Activated T-helper 2 cell treated with anti-CD3 and anti-CD28 coated beads, Interferon-gamma antibody, Interleukin-2, Interleukin-4, amounts not matched to agents 10 μg/mL and 5 μg/mL and 100 μg/mL, durations not matched to agents 14 hours and 24 hours and 36 hours (primary cell): ENCODE measurements at regions of chr5 and their contacts with region 1.

Region 1: GRCh38 chr5:55763746-55764420 is 26.0 kb downstream of the DDX4 start:
- DNase-seq: no peak
- H3K4me3 Mint-ChIP-seq: peak overlapping the region; percentile 61
- H3K27ac Mint-ChIP-seq: peak overlapping the region; percentile 62
- H3K4me1 Mint-ChIP-seq: peaks cover 39% of the 10 kb centered on the region
- H3K27me3 Mint-ChIP-seq: no peaks in the 10 kb centered on the region

Region 2: GRCh38 chr5:55711968-55712859 is 51.7 kb before region 1 on chr5 and contains the start of gene SLC38A9:
- intact Hi-C with region 1: loop called (anchors 5 kb)
- DNase-seq: peak; percentile 88
- H3K4me3 Mint-ChIP-seq: peak within 1 kb of the TSS; percentile 98
- H3K27ac Mint-ChIP-seq: peak within 1 kb of the TSS; percentile 90
- H3K4me1 Mint-ChIP-seq: peaks cover 30% of the 10 kb centered on the region
- H3K27me3 Mint-ChIP-seq: peaks cover 4% of the 10 kb centered on the region
- total RNA-seq, gene SLC38A9: 19.3 and 22.2 TPM in 2 replicates

Region 3: DNA sequence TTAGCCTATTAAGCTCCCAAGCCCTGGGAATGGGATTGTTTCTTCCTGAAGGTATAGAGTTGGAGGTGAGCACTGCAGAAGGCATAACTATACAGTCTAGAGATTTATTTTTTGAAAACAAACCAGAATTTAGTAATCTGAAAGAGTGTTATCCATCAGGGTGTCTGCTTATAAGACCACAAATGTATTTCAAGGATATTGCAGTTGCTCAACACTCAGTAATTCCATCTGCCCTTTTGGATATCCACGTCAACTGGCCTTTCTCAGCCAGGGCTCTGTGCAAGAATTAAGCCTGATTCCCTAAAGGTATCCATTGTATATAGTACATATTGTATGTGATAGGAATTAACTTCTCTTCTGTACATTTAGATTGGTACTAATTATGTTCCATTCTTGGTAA is 72.3 kb after region 1 on chr5:
- intact Hi-C with region 1: no loop called
- DNase-seq: no peak
- H3K4me3 Mint-ChIP-seq: no peak overlapping the region
- H3K27ac Mint-ChIP-seq: no peak overlapping the region
- H3K4me1 Mint-ChIP-seq: no peaks in the 10 kb centered on the region
- H3K27me3 Mint-ChIP-seq: no peaks in the 10 kb centered on the region

Region 4: DNA sequence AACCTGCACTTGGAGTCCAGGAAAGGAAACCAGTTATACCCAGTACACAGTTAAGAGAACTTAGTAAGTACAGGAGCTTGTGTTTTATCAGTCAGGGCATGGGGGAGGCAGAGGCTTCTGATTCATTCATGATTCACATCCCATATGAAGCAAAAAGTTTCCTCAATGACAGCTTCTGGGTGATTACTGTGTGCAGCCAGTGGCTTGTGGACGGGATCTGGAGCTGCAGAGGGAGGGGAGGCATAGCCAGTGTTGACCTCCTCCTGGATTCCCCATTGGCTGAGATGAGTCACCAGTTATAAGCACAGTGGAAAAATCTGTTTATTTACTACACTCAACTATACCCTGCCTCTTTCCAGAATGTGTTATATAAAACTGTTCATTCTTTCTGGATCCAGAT is 105.0 kb after region 1 on chr5:
- intact Hi-C with region 1: loop called (anchors 2 kb)
- DNase-seq: no peak
- H3K4me3 Mint-ChIP-seq: no peak overlapping the region
- H3K27ac Mint-ChIP-seq: peak overlapping the region; percentile 6
- H3K4me1 Mint-ChIP-seq: peaks cover 20% of the 10 kb centered on the region
- H3K27me3 Mint-ChIP-seq: no peaks in the 10 kb centered on the region

Region 5: DNA sequence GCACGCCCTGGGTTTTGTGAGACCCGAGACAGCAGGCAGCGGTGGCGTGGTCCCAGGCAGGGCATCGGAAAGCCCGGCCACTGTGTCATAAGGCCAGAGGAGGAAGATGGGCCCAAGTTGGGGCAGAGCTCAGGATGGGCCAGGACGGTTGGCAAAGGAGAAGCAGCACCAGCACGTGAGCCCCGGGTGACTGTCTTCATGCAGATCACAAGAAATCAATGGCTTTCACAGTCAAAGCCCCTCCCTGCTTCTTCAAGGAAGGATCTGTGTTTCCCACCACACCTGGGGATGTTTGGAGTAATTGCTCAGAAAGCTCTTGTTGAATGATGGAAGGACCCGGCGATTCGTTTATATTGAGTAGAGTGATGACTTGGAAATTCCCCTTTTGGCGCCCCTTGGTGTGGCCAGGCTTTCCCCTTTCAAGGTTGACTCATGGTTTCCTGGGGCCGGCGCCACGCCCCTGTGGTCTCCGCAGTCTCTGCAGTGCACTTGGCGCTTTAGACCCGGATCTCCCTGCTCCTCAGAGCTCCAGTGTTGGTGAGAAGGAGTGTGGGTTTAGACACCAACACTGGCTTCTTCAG is 139.3 kb after region 1 on chr5:
- intact Hi-C with region 1: loop called (anchors 5 kb)
- DNase-seq: peak; percentile 70
- H3K4me3 Mint-ChIP-seq: peak overlapping the region; percentile 13
- H3K27ac Mint-ChIP-seq: peak overlapping the region; percentile 60
- H3K4me1 Mint-ChIP-seq: peaks cover 45% of the 10 kb centered on the region
- H3K27me3 Mint-ChIP-seq: no peaks in the 10 kb centered on the region